Activated naive CD4-positive, alpha-beta T cell treated with anti-CD3 and anti-CD28 coated beads, Interleukin-2, amount 10 ng/mL, durations not matched to agents 7 days and 5 days (primary cell): ENCODE measurements at regions of chr2 and their contacts with region 1.

Region 1: DNA sequence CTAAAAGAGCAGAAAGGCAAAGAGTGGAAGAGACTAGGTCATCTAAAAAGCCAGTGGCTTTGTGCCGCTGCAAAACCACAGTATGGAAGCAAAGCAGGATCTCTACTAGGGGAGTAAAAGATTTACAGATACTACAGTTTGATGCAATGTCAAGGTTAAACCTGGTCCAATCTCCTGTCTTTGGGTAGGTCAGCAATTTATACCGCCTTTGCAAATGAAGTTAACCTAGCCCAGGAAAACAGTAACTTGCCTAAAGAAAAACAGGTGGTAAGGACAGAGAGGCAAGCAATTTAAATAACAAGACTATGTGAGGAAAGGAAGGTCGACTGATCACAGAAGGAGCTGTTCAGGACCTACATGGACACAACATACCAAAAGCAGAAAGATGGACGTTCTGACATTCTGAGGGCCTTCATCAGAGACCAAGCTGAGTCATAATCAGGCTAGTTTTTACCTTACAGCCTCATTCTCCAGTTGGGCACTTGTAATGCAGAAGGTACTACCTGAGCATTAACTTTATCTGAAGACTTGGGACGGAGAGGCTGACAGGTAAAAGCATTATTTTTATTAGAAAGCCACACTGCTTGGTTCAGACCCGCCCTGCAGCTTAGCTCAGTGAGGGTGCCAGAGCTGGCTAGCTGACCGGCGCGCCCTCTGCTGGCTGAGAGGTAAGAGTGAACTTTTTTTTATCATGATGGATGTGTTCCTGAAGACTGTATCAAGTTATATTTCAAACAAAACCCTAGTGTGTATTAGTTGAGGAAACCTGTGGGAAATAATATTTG is 15.9 kb downstream of the CDKL4 start:
- DNase-seq: peak; percentile 90
- H3K4me3 Mint-ChIP-seq: peak overlapping the region; percentile 74
- H3K27ac Mint-ChIP-seq: peak overlapping the region; percentile 96
- H3K4me1 Mint-ChIP-seq: peaks cover 55% of the 10 kb centered on the region
- H3K27me3 Mint-ChIP-seq: no peaks in the 10 kb centered on the region

Region 2: GRCh38 chr2:38815614-38816479 is 412.0 kb before region 1 on chr2:
- CTCF ChIA-PET with region 1: no interaction called
- DNase-seq: no peak
- H3K4me3 Mint-ChIP-seq: no peak overlapping the region
- H3K27ac Mint-ChIP-seq: no peak overlapping the region
- H3K4me1 Mint-ChIP-seq: no peaks in the 10 kb centered on the region
- H3K27me3 Mint-ChIP-seq: no peaks in the 10 kb centered on the region

Region 3: GRCh38 chr2:39059366-39059952 is 168.4 kb before region 1 on chr2:
- CTCF ChIA-PET with region 1: interaction called, 155 read pairs
- DNase-seq: no peak
- H3K4me3 Mint-ChIP-seq: no peak overlapping the region
- H3K27ac Mint-ChIP-seq: peak overlapping the region; percentile 11
- H3K4me1 Mint-ChIP-seq: peaks cover 30% of the 10 kb centered on the region
- H3K27me3 Mint-ChIP-seq: no peaks in the 10 kb centered on the region

Region 4: GRCh38 chr2:39099311-39099869 is 128.4 kb before region 1 on chr2:
- CTCF ChIA-PET with region 1: interaction called, 11 read pairs
- DNase-seq: no peak
- H3K4me3 Mint-ChIP-seq: no peak overlapping the region
- H3K27ac Mint-ChIP-seq: peak overlapping the region; percentile 79
- H3K4me1 Mint-ChIP-seq: peaks cover 70% of the 10 kb centered on the region
- H3K27me3 Mint-ChIP-seq: no peaks in the 10 kb centered on the region

Region 5: DNA sequence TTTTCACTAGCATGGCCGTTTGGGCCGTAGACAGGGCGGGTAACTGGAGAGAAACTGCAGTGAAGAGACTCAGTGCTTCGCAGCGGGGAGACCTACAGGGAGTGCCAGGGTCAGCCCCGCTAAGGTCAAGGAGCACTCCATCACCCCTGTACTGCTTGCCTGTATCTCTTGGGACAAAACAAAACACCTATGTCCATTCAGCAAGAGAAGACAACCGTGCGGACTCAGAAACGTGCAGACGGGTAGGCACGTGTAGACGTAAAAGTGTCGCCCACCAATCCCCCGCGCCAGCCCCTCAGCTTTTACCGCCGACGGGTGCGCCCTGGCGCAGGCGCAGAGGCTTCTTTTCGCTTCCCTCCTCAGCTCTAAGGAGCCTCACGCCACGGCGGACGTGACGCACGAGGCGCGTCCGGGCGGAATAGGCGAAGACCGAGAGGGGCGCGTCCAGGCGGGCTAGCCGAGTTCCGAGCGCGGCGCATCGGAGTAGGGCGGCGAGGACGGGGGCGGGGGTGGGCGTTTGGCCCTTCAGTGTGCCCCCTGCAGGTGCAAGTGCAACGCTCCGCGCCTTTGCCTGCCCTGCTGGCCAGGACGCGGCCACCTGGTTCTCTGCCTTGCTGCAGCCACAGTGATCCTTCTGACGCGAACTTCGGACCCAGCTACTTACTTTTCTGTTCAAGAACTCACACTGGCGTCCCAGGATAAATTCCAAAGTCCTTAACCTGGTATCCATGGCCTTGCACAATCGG is 103.6 kb before region 1 on chr2:
- CTCF ChIA-PET with region 1: interaction called, 100 read pairs
- DNase-seq: peak; percentile 98
- H3K4me3 Mint-ChIP-seq: peak overlapping the region; percentile 92
- H3K27ac Mint-ChIP-seq: peak overlapping the region; percentile 99
- H3K4me1 Mint-ChIP-seq: peaks cover 68% of the 10 kb centered on the region
- H3K27me3 Mint-ChIP-seq: no peaks in the 10 kb centered on the region

Region 6: DNA sequence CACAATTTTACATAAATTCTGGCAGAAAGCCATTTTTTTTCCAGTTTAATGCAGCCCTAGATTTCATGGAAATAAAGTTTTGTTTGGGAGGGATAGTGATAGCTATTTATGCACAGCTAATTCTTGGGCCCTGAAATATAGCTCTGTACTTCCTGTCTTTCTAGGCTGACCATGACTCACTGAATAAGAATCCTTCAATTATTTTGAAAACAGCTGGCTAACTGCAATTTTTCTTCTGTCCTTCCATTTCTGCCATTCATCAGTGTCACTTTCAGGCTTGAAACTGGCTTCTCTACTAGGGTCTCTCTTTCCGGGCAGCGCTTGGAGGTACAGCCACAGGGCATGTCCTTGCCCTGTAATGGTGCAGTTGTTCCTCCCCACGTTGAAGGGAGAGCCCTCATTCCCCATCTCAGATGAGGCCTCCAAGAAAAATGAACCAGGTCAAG is 340.8 kb after region 1 on chr2:
- CTCF ChIA-PET with region 1: no interaction called
- DNase-seq: no peak
- H3K4me3 Mint-ChIP-seq: no peak overlapping the region
- H3K27ac Mint-ChIP-seq: no peak overlapping the region
- H3K4me1 Mint-ChIP-seq: no peaks in the 10 kb centered on the region
- H3K27me3 Mint-ChIP-seq: no peaks in the 10 kb centered on the region